Aorta (tissue), 5 donors: ENCODE measurements at regions of chr9 and their contacts with region 1.

Region 1: DNA sequence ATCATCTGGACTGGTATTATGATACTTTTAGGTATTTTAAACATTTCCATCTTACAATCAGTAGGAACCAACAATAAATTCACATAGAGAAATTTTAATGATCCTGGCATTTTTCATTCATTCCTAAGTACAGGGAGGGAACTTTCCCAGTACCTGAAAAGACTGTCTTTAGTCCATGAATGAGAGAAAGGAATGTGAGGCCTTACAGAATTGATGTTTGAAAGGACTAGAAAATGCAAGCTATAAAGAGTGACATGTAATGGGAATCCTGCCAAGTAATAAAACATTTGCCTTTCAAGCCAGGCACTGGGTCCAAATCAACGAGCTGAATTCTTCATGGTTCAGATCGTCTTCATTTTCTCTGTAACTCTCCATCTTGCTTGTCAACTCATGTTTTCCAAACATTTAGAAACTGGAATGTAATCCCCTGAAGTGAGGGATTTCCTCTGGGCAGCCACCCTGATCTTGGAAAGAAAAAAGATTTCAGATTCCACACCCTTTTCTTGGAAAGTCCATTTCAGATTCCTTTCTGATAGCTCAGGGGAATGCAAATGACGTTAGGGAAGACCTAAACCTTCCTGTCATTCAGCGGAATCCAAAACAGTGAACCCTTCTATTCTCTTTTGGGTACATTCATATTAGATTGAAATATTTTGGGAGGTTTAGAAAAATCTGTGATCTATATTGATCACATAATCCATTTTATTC is 315.8 kb downstream of the SH3GL2 start:
- DNase-seq: no peak
- ATAC-seq: no peak
- H3K4me3 ChIP-seq: no peak overlapping the region
- H3K27ac ChIP-seq: no peak overlapping the region
- H3K4me1 ChIP-seq: no peaks in the 10 kb centered on the region
- H3K27me3 ChIP-seq: no peaks in the 10 kb centered on the region

Region 2: DNA sequence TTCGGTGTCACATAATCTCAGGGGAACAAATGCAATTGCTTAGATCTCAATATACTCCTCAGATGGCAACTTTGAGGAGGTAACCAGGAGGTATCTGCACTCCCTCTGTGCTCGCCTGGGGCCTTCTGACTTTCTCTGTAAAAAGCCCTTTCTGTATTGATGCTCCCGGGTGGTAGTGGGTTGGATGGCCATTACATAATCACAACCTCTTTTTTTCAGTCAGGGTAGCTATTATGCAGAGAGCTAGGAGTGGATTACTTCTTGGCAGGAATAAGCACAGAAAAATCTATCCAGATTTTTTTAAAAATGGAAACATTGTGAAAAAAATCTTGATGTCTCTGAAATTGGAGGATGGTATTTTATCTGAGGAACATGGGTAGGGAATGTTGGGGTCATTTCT is 199.1 kb before region 1 on chr9:
- intact Hi-C with region 1: no loop called
- DNase-seq: no peak
- ATAC-seq: no peak
- H3K4me3 ChIP-seq: no peak overlapping the region
- H3K27ac ChIP-seq: no peak overlapping the region
- H3K4me1 ChIP-seq: no peaks in the 10 kb centered on the region
- H3K27me3 ChIP-seq: no peaks in the 10 kb centered on the region

Region 3: GRCh38 chr9:17832812-17833211 is 61.8 kb before region 1 on chr9:
- intact Hi-C with region 1: loop called in 1 of 2 experiments (anchors 5 kb)
- DNase-seq: no peak
- ATAC-seq: no peak
- H3K4me3 ChIP-seq: no peak overlapping the region
- H3K27ac ChIP-seq: no peak overlapping the region
- H3K4me1 ChIP-seq: no peaks in the 10 kb centered on the region
- H3K27me3 ChIP-seq: no peaks in the 10 kb centered on the region